MCF 10A (cell line): ENCODE measurements at regions of chr20 and their contacts with region 1.

Region 1: DNA sequence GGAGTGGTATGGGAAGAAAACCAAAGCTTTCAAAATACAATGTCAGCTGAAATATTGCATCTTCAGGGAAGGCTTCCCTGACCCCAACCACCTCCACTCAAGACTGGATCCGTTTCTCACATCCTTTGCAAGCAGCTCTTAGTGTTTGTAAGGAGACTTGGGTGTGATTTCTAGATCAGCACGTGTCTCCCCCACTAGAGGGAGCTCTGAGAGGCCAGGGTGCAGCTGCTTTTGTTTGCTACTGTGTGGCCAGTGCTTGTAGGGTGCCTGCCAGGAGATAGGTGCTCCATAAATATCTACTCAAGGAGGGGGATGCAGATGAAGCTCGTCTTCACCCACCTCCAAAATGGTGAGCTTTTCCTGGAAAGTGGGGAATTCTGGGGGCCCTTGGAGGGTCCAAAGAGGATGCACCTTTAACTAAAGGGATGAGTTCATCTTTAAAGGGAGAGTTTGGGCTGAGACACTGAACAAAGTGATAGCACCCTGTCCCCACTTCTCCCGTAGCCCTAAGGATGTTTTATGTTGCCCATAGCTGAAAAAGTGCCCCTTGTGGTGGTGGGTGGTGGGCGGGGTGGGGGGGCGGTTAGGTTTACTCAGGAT is 52.6 kb upstream of the MAFB start:
- DNase-seq: peak; percentile 69
- H3K4me3 Mint-ChIP-seq: no peak overlapping the region
- H3K27ac Mint-ChIP-seq: no peak overlapping the region
- H3K4me1 Mint-ChIP-seq: no peaks in the 10 kb centered on the region
- H3K27me3 Mint-ChIP-seq: peaks cover 14% of the 10 kb centered on the region
- CTCF ChIP-seq: peak; percentile 67

Region 2: DNA sequence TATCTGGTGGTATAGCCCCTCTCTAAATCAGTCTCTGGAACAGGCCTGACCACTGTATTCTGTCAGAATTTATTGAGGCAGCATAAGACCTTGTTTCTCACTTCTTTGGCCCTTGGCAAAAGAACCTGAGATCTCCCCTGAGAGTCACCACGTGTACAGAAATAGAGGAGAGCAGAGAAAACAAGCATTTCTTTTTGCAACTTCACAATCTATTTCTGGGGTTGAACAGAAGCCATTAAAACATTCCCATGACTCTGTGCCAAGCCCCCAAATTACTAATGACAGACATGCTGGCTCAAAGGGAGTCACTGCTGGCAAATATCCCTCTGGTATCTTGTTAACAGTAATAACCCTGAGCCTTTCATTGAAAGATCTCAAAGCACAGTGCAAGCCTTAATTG is 447.9 kb before region 1 on chr20:
- CTCF ChIA-PET with region 1: no interaction called
- POLR2A ChIA-PET with region 1: no interaction called
- intact Hi-C with region 1: no loop called
- DNase-seq: no peak
- H3K4me3 Mint-ChIP-seq: no peak overlapping the region
- H3K27ac Mint-ChIP-seq: no peak overlapping the region
- H3K4me1 Mint-ChIP-seq: peaks cover 2% of the 10 kb centered on the region
- H3K27me3 Mint-ChIP-seq: no peaks in the 10 kb centered on the region
- CTCF ChIP-seq: no peak

Region 3: DNA sequence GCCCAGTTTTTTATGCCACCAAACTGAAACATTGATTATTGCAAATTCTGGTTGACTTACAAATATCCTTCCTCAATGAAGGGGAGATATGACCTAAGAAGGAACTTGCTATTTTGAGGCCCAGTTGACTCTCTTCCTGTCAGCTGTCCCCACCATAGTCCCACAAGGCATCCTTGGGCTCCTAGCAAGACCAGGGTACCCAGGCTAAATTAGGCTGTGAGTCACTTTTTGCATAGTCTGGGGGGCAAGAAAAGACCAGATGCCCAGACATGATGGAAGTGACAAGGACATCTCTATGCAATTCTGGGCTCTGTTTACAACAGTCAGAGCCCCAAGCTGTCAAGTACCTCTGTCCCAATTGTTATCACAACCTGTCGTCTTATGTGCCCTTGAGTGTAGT is 20.8 kb before region 1 on chr20:
- CTCF ChIA-PET with region 1: interaction called, 11 read pairs
- POLR2A ChIA-PET with region 1: no interaction called
- intact Hi-C with region 1: no loop called
- DNase-seq: no peak
- H3K4me3 Mint-ChIP-seq: no peak overlapping the region
- H3K27ac Mint-ChIP-seq: no peak overlapping the region
- H3K4me1 Mint-ChIP-seq: no peaks in the 10 kb centered on the region
- H3K27me3 Mint-ChIP-seq: no peaks in the 10 kb centered on the region
- CTCF ChIP-seq: no peak

Region 4: GRCh38 chr20:40754339-40754943 is 12.8 kb after region 1 on chr20:
- CTCF ChIA-PET with region 1: interaction called, 22 read pairs
- POLR2A ChIA-PET with region 1: no interaction called
- intact Hi-C with region 1: no loop called
- DNase-seq: no peak
- H3K4me3 Mint-ChIP-seq: no peak overlapping the region
- H3K27ac Mint-ChIP-seq: no peak overlapping the region
- H3K4me1 Mint-ChIP-seq: peaks cover 11% of the 10 kb centered on the region
- H3K27me3 Mint-ChIP-seq: no peaks in the 10 kb centered on the region
- CTCF ChIP-seq: no peak

Region 5: DNA sequence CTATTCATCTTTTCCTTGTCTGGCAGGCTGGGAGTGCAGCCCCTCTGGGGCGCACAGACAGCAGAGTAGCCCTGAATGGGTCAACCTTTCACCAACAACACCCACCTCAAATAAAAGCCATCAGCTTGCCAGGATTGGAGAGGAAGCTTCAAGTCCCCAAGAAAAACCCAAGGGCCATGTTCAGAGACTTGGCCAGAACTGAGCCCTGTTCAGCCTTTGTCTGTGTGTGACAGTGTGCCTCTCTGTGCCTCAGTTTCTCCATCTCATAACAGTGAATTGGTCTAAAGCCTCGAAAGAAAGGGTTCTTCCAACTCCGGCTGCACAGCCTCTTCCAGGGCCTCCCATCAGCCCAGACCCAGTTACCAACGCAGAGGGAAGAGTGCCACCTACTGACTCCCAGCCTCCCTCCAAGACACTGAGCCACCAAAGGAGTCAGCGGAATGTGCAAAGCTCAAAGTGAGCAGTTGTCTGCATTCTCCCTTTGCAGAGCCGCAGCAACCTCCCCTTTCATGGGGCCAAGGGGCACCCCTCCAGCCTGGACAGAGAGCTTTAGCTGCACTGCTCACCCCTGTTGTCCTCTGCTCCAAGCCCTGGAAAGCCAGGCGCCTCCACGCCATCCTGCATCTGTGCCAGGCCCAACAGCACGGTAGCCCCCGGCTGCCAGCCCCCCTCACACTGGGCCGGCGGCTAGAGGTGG is 204.3 kb after region 1 on chr20:
- CTCF ChIA-PET with region 1: interaction called, 22 read pairs
- POLR2A ChIA-PET with region 1: no interaction called
- intact Hi-C with region 1: loop called (anchors 1 kb)
- DNase-seq: peak; percentile 52
- H3K4me3 Mint-ChIP-seq: no peak overlapping the region
- H3K27ac Mint-ChIP-seq: no peak overlapping the region
- H3K4me1 Mint-ChIP-seq: peaks cover 6% of the 10 kb centered on the region
- H3K27me3 Mint-ChIP-seq: no peaks in the 10 kb centered on the region
- CTCF ChIP-seq: peak; percentile 16